ENCODE measurements at regions of chr6 and their contacts with region 1.

Region 1: GRCh38 chr6:135675862-135676261 is 175.6 kb upstream of the PDE7B start:
- DNase-seq: peak in 7 of 9 donors; percentile 51 to 71 (median 63)
- ATAC-seq: peak; percentile 79
- H3K4me3 ChIP-seq: no peak overlapping the region
- H3K4me3 Mint-ChIP-seq: no peak overlapping the region
- H3K27ac ChIP-seq: no peak overlapping the region
- H3K27ac Mint-ChIP-seq: peak overlapping the region in 2 of 9 donors; percentile 53 to 63
- H3K4me1 ChIP-seq: no peaks in the 10 kb centered on the region
- H3K4me1 Mint-ChIP-seq: peaks cover 0 to 39% (median 0%) of the 10 kb centered on the region in 7 donors
- H3K27me3 ChIP-seq: peaks cover 0 to 4% of the 10 kb centered on the region in 2 donors
- H3K27me3 Mint-ChIP-seq: no peaks in the 10 kb centered on the region

Region 2: GRCh38 chr6:135451693-135452092 is 224.2 kb before region 1 on chr6:
- CTCF ChIA-PET with region 1: no interaction called
- POLR2A ChIA-PET with region 1: no interaction called
- intact Hi-C with region 1: loop called in 1 of 2 experiments (anchors 1 kb)
- DNase-seq: peak in 6 of 9 donors; percentile 13 to 54 (median 44)
- ATAC-seq: peak; percentile 63
- H3K4me3 ChIP-seq: no peak overlapping the region
- H3K4me3 Mint-ChIP-seq: no peak overlapping the region
- H3K27ac ChIP-seq: no peak overlapping the region
- H3K27ac Mint-ChIP-seq: no peak overlapping the region
- H3K4me1 ChIP-seq: no peaks in the 10 kb centered on the region
- H3K4me1 Mint-ChIP-seq: peaks cover 0 to 4% (median 0%) of the 10 kb centered on the region in 7 donors
- H3K27me3 ChIP-seq: no peaks in the 10 kb centered on the region
- H3K27me3 Mint-ChIP-seq: no peaks in the 10 kb centered on the region

Region 3: GRCh38 chr6:135739288-135739687 is 63.4 kb after region 1 on chr6:
- CTCF ChIA-PET with region 1: no interaction called
- POLR2A ChIA-PET with region 1: no interaction called
- intact Hi-C with region 1: no loop called
- DNase-seq: no peak
- ATAC-seq: no peak
- H3K4me3 ChIP-seq: no peak overlapping the region
- H3K4me3 Mint-ChIP-seq: no peak overlapping the region
- H3K27ac ChIP-seq: no peak overlapping the region
- H3K27ac Mint-ChIP-seq: no peak overlapping the region
- H3K4me1 ChIP-seq: no peaks in the 10 kb centered on the region
- H3K4me1 Mint-ChIP-seq: peaks cover 0 to 5% (median 0%) of the 10 kb centered on the region in 7 donors
- H3K27me3 ChIP-seq: no peaks in the 10 kb centered on the region
- H3K27me3 Mint-ChIP-seq: peaks cover 0 to 4% (median 0%) of the 10 kb centered on the region in 5 donors

Region 4: GRCh38 chr6:135819665-135820064 is 143.8 kb after region 1 on chr6:
- CTCF ChIA-PET with region 1: no interaction called
- POLR2A ChIA-PET with region 1: no interaction called
- intact Hi-C with region 1: no loop called
- DNase-seq: no peak
- ATAC-seq: peak; percentile 54
- H3K4me3 ChIP-seq: no peak overlapping the region
- H3K4me3 Mint-ChIP-seq: no peak overlapping the region
- H3K27ac ChIP-seq: no peak overlapping the region
- H3K27ac Mint-ChIP-seq: peak overlapping the region in 1 of 9 donors; percentile 25
- H3K4me1 ChIP-seq: no peaks in the 10 kb centered on the region
- H3K4me1 Mint-ChIP-seq: peaks cover 0 to 2% (median 0%) of the 10 kb centered on the region in 7 donors
- H3K27me3 ChIP-seq: no peaks in the 10 kb centered on the region
- H3K27me3 Mint-ChIP-seq: peaks cover 0 to 6% (median 0%) of the 10 kb centered on the region in 5 donors

Region 5: DNA sequence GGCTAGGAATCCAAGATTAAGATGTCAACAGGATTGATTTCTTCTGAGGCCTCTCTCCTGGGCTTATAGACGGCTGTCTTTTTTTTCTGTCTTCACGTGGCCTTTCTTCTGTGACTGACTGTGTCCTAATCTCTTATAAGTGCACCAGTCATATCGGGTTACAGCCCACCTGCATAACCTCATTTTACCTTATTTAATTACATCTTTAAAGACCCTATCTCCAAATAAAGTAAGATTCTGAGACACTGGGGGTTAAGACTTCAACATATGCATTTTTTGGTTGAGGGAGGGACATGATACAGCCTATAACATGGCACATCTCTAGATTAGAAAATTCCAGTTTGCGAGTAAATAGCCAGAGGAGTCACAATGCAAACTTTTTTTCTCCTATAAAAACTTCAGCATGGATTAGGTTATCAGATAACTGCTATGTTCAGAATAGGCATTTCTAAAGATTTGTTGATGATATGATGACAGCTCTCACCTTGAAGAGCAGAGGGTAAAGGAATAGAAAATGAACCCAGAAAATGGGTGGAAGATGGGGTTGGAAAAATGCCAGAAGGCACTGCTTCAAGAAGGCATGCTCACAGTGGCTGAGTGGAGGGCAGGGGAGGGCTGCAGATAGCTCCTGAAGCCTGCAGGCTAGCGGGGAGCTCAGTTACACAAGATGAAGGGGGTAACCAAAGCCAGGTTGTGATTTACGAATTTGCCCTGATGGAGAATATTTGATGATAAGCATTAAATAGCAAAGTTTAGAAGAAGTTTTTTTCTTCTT is 166.9 kb after region 1 on chr6:
- CTCF ChIA-PET with region 1: no interaction called
- POLR2A ChIA-PET with region 1: no interaction called
- intact Hi-C with region 1: loop called in 1 of 2 experiments (anchors 5 kb)
- DNase-seq: no peak
- ATAC-seq: no peak
- H3K4me3 ChIP-seq: no peak overlapping the region
- H3K4me3 Mint-ChIP-seq: no peak overlapping the region
- H3K27ac ChIP-seq: no peak overlapping the region
- H3K27ac Mint-ChIP-seq: peak overlapping the region in 1 of 9 donors; percentile 13
- H3K4me1 ChIP-seq: no peaks in the 10 kb centered on the region
- H3K4me1 Mint-ChIP-seq: peaks cover 0 to 11% (median 6%) of the 10 kb centered on the region in 7 donors
- H3K27me3 ChIP-seq: no peaks in the 10 kb centered on the region
- H3K27me3 Mint-ChIP-seq: peaks cover 0 to 16% (median 0%) of the 10 kb centered on the region in 5 donors

Region 6: GRCh38 chr6:136226027-136226673 is 550.3 kb after region 1 on chr6:
- CTCF ChIA-PET with region 1: interaction called, 38 read pairs
- POLR2A ChIA-PET with region 1: no interaction called
- intact Hi-C with region 1: loop called (anchors 1 kb)
- DNase-seq: peak; percentile 25 to 68 (median 57)
- ATAC-seq: peak; percentile 95
- H3K4me3 ChIP-seq: no peak overlapping the region
- H3K4me3 Mint-ChIP-seq: peak overlapping the region in 9 of 10 donors; percentile 4 to 73 (median 60)
- H3K27ac ChIP-seq: no peak overlapping the region
- H3K27ac Mint-ChIP-seq: peak overlapping the region in 1 of 9 donors; percentile 6
- H3K4me1 ChIP-seq: no peaks in the 10 kb centered on the region
- H3K4me1 Mint-ChIP-seq: peaks cover 0 to 23% (median 6%) of the 10 kb centered on the region in 7 donors
- H3K27me3 ChIP-seq: no peaks in the 10 kb centered on the region
- H3K27me3 Mint-ChIP-seq: no peaks in the 10 kb centered on the region

Region 7: GRCh38 chr6:136282906-136283305 is 607.0 kb after region 1 on chr6:
- CTCF ChIA-PET with region 1: no interaction called
- POLR2A ChIA-PET with region 1: no interaction called
- intact Hi-C with region 1: no loop called
- DNase-seq: no peak
- ATAC-seq: peak; percentile 25
- H3K4me3 ChIP-seq: peak overlapping the region; percentile 0
- H3K4me3 Mint-ChIP-seq: peak overlapping the region; percentile 58 to 100 (median 84)
- H3K27ac ChIP-seq: peak overlapping the region; percentile 47
- H3K27ac Mint-ChIP-seq: peak overlapping the region in 7 of 9 donors; percentile 32 to 86 (median 54)
- H3K4me1 ChIP-seq: peaks cover 61 to 63% of the 10 kb centered on the region in 2 donors
- H3K4me1 Mint-ChIP-seq: peaks cover 55 to 97% (median 86%) of the 10 kb centered on the region in 7 donors
- H3K27me3 ChIP-seq: no peaks in the 10 kb centered on the region
- H3K27me3 Mint-ChIP-seq: no peaks in the 10 kb centered on the region

Region 8: GRCh38 chr6:136550330-136551071 is 874.6 kb after region 1 on chr6 and contains the start of gene MAP7:
- CTCF ChIA-PET with region 1: no interaction called
- POLR2A ChIA-PET with region 1: no interaction called
- intact Hi-C with region 1: loop called in 1 of 2 experiments (anchors 5 kb)
- DNase-seq: peak; percentile 30 to 74 (median 60)
- ATAC-seq: peak; percentile 91
- H3K4me3 ChIP-seq: peak within 1 kb of the TSS; percentile 46
- H3K4me3 Mint-ChIP-seq: peak within 1 kb of the TSS; percentile 58 to 82 (median 72)
- H3K27ac ChIP-seq: no peak within 1 kb of the TSS
- H3K27ac Mint-ChIP-seq: peak within 1 kb of the TSS in 1 of 9 donors; percentile 49
- H3K4me1 ChIP-seq: no peaks in the 10 kb centered on the region
- H3K4me1 Mint-ChIP-seq: peaks cover 0 to 16% (median 7%) of the 10 kb centered on the region in 7 donors
- H3K27me3 ChIP-seq: peaks cover 7 to 14% of the 10 kb centered on the region in 2 donors
- H3K27me3 Mint-ChIP-seq: peaks cover 34 to 64% (median 39%) of the 10 kb centered on the region in 5 donors
- total RNA-seq, gene MAP7: 0.14 to 1.1 (median 0.32) TPM